ENCODE measurements at regions of chr5 and their contacts with region 1.

Region 1: DNA sequence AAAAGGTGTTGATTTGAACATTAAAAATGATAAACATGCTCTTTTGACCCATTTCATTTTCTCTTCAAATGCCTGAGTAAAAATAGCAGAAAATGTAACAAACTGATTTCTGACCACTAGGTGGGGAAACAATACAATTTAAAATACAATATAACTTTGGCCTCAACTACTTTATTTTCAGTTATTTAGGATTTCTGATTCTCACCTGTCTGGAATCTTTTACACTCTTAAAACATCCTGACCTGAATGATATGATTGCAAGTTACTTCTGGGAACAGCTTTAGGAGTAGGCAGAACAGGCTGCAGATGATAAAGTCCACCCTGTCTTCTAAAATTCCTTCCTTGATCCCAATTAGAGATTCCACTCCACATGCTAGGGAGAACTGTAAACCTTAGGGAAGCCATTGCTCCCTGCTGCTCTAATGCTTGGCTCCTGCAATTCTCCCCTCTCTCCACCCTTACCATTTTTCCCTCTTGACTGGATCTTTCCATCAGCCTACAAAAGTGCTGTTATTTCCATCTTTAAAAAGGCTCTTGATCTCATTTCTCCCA is 70.3 kb downstream of the FYB1 start:
- DNase-seq: no peak
- H3K4me3 ChIP-seq: no peak overlapping the region
- H3K27ac ChIP-seq: no peak overlapping the region; the same call in 1 of the 2 replicates
- H3K4me1 ChIP-seq: peaks cover 6% of the 10 kb centered on the region
- H3K27me3 ChIP-seq: no peaks in the 10 kb centered on the region
- CTCF ChIP-seq: peak; percentile 76

Region 2: DNA sequence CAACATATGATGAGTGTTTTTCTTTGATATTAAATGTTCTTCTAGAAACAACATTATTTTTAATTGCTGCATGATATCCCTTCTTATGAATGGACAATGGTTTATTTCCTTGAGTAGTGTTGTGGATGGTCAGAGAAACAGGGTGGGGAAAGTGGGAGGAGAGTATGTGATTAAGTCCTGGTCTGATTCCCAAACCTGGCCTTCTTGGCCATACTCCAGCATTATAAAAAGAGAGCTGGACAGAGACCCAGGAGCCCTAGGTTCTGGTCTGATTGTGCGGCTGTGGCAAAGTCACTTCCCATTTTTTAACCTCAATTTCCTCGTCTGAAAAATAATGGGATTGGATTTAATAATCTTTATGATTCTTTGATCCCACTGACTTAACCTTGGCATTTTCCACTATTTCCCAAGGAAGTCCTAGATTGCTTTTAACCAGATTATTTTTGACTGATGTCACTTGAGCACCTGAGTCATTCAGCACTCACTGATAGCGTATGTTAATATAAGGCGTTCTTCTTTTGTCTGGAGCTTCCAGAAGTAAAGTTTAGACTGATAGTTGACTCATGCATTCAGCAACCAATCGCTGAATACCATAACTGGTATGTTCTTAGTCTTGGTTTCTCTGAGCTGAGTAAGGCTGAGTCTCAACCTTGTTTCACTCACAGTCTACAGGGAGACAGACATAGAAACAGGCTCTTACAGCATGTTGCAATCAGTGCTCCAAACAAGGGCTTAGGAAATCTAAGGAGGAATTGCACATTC is 277.1 kb before region 1 on chr5:
- CTCF ChIA-PET with region 1: interaction called, 11 read pairs
- POLR2A ChIA-PET with region 1: no interaction called
- intact Hi-C with region 1: no loop called
- DNase-seq: peak; percentile 76 to 100
- H3K4me3 ChIP-seq: 0 out of 2 replicates have a peak overlapping the region, but pooled peaks have one; percentile 16
- H3K27ac ChIP-seq: peak overlapping the region; percentile 97
- H3K4me1 ChIP-seq: peaks cover 51% of the 10 kb centered on the region
- H3K27me3 ChIP-seq: no peaks in the 10 kb centered on the region
- CTCF ChIP-seq: no peak

Region 3: GRCh38 chr5:38994324-38994927 is 154.6 kb before region 1 on chr5:
- CTCF ChIA-PET with region 1: interaction called, 3 read pairs
- POLR2A ChIA-PET with region 1: no interaction called
- intact Hi-C with region 1: loop called (anchors 5 kb)
- DNase-seq: peak; percentile 50 to 73
- H3K4me3 ChIP-seq: no peak overlapping the region
- H3K27ac ChIP-seq: no peak overlapping the region
- H3K4me1 ChIP-seq: no peaks in the 10 kb centered on the region
- H3K27me3 ChIP-seq: no peaks in the 10 kb centered on the region
- CTCF ChIP-seq: peak; percentile 80

Region 4: DNA sequence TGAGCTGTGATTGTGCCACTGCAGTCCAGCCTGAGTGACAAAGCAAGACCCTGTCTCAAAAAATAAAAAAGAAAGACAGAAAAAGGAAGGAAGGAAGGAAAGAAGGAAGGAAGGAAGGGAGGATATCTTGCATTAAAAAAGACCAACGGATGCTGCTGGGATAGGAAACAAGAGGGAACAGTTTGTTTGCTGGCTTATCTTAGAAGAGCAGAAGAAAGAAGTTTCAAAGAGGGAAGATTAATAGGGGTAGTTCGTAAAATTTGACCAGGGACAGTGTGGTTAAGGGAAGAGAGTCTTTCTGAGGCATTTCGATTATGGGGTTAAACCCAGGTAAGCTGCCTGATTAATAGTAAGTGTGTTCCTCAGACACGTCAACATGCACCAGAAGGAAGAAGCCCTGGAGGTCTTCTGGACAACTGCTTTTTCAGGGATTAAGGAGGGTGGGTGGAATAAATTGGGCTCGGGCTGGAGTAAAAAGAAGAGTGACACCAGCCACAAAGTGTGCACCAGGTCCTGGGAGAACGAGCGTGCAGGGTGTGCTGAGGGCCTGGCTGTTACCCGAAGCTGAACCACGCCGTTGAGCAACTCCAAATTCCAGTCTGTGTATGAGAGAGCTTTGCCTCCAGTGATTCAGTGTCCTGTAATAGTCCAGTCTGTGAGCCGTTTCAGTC is 45.5 kb after region 1 on chr5:
- CTCF ChIA-PET with region 1: no interaction called
- POLR2A ChIA-PET with region 1: no interaction called
- intact Hi-C with region 1: loop called (anchors 5 kb)
- DNase-seq: peak; percentile 78 to 93
- H3K4me3 ChIP-seq: peak overlapping the region; percentile 13; the same call in 1 of the 2 replicates
- H3K27ac ChIP-seq: peak overlapping the region; percentile 91
- H3K4me1 ChIP-seq: peaks cover 56% of the 10 kb centered on the region
- H3K27me3 ChIP-seq: no peaks in the 10 kb centered on the region
- CTCF ChIP-seq: no peak

Region 5: GRCh38 chr5:39256477-39257235 is 107.6 kb after region 1 on chr5:
- CTCF ChIA-PET with region 1: no interaction called
- POLR2A ChIA-PET with region 1: no interaction called
- intact Hi-C with region 1: no loop called
- DNase-seq: peak; percentile 26 to 80
- H3K4me3 ChIP-seq: peak overlapping the region; percentile 32; the same call in 1 of the 2 replicates
- H3K27ac ChIP-seq: peak overlapping the region; percentile 62
- H3K4me1 ChIP-seq: peaks cover 13% of the 10 kb centered on the region
- H3K27me3 ChIP-seq: no peaks in the 10 kb centered on the region
- CTCF ChIP-seq: no peak

Region 6: DNA sequence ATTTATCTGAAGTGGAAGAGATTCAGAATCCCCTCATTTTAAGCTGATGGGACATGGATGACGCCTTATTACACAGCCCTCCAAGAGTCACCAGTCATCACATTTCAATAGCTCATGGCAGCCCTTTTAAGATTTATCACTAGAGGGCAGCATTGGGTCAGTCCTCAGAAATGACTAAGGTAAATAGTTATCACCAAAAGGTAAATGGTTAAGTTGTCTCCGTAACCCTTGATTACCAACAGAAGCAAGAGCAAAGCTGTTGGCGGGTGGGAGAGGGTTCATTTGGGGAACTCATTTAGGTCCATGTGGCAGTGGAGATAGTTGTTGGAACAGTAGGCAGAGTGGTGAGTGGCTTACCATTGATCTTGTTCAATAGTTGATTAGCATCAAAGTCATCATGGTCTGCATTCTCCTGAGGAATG is 227.2 kb after region 1 on chr5:
- CTCF ChIA-PET with region 1: interaction called, 3 read pairs
- POLR2A ChIA-PET with region 1: no interaction called
- intact Hi-C with region 1: loop called (anchors 2 kb)
- DNase-seq: peak; percentile 63 to 66
- H3K4me3 ChIP-seq: no peak overlapping the region
- H3K27ac ChIP-seq: no peak overlapping the region
- H3K4me1 ChIP-seq: no peaks in the 10 kb centered on the region
- H3K27me3 ChIP-seq: no peaks in the 10 kb centered on the region
- CTCF ChIP-seq: peak; percentile 96

Measured in PC-9 (cell line).